ENCODE measurements at regions of chrX and their contacts with region 1.

Region 1: GRCh38 chrX:318739-319578 is at the start of gene GTPBP6:
- DNase-seq: peak; percentile 99
- ATAC-seq: peak; percentile 78
- H3K4me3 Mint-ChIP-seq: peak within 1 kb of the TSS; percentile 88
- H3K27ac Mint-ChIP-seq: peak within 1 kb of the TSS; percentile 99
- H3K4me1 Mint-ChIP-seq: peaks cover 23% of the 10 kb centered on the region
- H3K27me3 Mint-ChIP-seq: no peaks in the 10 kb centered on the region
- total RNA-seq, gene GTPBP6: 54.5 to 60.2 TPM

Region 2: GRCh38 chrX:283115-283845 is 35.7 kb before region 1 on chrX:
- CTCF ChIA-PET with region 1: no interaction called
- POLR2A ChIA-PET with region 1: no interaction called
- intact Hi-C with region 1: loop called (anchors 1 kb)
- DNase-seq: peak; percentile 96
- ATAC-seq: peak; percentile 96
- H3K4me3 Mint-ChIP-seq: peak overlapping the region; percentile 94
- H3K27ac Mint-ChIP-seq: peak overlapping the region; percentile 97
- H3K4me1 Mint-ChIP-seq: peaks cover 26% of the 10 kb centered on the region
- H3K27me3 Mint-ChIP-seq: no peaks in the 10 kb centered on the region

Region 3: GRCh38 chrX:338836-339400 is 20.0 kb after region 1 on chrX:
- CTCF ChIA-PET with region 1: no interaction called
- POLR2A ChIA-PET with region 1: no interaction called
- intact Hi-C with region 1: loop called in 1 of 2 experiments (anchors 2 kb)
- DNase-seq: no peak
- ATAC-seq: no peak
- H3K4me3 Mint-ChIP-seq: no peak overlapping the region
- H3K27ac Mint-ChIP-seq: no peak overlapping the region
- H3K4me1 Mint-ChIP-seq: no peaks in the 10 kb centered on the region
- H3K27me3 Mint-ChIP-seq: no peaks in the 10 kb centered on the region

Region 4: DNA sequence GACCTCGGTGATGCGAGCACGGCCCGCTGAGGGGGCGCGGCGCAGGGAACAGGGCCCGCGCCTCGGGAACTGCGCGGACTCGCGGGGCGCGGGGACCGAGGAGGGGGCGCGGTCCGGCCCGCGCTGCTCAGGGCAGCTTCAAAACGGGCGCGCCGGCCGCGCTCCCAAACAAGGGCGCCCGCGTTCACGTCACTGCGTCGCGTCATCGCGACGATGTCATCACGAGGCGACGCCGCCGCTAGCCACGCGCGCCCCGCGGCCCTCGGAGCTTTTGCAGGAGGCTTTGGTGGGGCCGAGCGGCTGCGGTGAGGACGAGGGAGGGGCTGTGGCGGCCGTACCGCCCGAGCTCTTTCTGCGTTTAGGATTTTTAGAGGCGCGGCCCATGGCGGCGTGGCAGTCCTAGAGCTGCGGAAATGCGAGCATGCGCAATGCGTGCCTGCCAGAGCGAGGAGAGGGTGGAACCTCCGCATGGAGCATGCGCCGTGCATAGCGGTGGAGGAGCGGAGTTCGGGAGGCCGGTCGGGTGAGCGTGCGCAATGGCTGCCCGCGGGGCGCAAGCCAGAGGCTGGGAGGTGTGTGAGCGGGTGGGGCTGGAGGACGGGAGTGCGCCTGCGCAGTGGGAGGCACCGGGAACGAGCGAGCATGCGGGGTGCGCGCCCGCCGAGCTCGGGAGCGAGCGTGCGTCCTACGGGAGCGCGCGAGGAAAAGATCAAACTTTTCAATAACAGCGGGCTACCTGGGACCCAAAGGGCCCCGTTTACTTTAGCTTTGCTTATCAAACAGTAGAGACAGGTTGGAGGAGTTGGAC is 68.0 kb after region 1 on chrX and contains the start of gene PPP2R3B:
- CTCF ChIA-PET with region 1: no interaction called
- POLR2A ChIA-PET with region 1: no interaction called
- intact Hi-C with region 1: loop called (anchors 1 kb)
- DNase-seq: peak; percentile 99
- ATAC-seq: peak; percentile 99
- H3K4me3 Mint-ChIP-seq: peak within 1 kb of the TSS; percentile 88
- H3K27ac Mint-ChIP-seq: peak within 1 kb of the TSS; percentile 96
- H3K4me1 Mint-ChIP-seq: peaks cover 8% of the 10 kb centered on the region
- H3K27me3 Mint-ChIP-seq: no peaks in the 10 kb centered on the region
- total RNA-seq, gene PPP2R3B: 23.3 to 26.8 TPM

Region 5: DNA sequence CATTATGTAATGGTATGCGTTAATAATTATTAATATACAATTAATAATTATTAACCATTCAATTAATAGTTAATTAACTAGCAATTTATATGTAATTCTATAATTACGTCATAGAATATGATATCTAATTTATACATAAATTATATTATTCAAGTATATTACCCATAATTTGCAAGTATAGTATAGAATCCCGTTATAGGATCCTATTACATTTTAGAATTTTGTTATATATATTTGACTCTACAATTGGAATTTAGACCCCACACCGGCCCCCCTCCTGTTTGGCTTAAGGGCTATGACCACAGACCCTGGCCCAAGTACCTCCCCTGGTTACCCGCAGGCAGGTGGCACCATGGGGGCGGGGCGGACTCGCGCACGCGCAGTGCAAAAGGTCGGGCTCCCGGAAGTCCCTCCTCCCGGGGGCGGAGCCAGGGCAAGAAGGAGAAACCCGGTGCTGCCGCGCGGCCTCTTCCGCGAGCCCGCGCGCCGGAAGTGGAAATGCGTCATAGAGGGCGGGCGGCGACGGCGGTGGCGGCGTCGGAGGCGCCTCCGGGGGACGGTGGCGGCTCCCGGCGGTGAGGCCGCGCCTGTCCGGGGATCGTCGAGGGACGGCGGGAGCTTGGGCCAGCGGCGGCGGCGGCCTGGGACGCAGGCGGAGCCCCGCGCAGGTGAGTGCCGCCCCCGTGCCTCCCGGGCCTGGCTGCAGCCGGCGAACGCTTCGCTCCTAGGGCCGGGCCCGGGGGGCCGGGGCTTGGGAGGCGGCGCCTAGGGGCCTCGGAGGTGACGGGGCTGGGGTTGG is 1272.3 kb after region 1 on chrX and contains the start of gene AKAP17A:
- CTCF ChIA-PET with region 1: no interaction called
- POLR2A ChIA-PET with region 1: no interaction called
- intact Hi-C with region 1: loop called in 1 of 2 experiments (anchors 1 kb)
- DNase-seq: peak; percentile 99
- ATAC-seq: peak; percentile 91
- H3K4me3 Mint-ChIP-seq: peak within 1 kb of the TSS; percentile 91
- H3K27ac Mint-ChIP-seq: peak within 1 kb of the TSS; percentile 89
- H3K4me1 Mint-ChIP-seq: peaks cover 27% of the 10 kb centered on the region
- H3K27me3 Mint-ChIP-seq: no peaks in the 10 kb centered on the region
- total RNA-seq, gene AKAP17A: 49.7 to 51.2 TPM